Common myeloid progenitor, CD34-positive (primary cell): ENCODE measurements at regions of chr5 and their contacts with region 1.

Region 1: DNA sequence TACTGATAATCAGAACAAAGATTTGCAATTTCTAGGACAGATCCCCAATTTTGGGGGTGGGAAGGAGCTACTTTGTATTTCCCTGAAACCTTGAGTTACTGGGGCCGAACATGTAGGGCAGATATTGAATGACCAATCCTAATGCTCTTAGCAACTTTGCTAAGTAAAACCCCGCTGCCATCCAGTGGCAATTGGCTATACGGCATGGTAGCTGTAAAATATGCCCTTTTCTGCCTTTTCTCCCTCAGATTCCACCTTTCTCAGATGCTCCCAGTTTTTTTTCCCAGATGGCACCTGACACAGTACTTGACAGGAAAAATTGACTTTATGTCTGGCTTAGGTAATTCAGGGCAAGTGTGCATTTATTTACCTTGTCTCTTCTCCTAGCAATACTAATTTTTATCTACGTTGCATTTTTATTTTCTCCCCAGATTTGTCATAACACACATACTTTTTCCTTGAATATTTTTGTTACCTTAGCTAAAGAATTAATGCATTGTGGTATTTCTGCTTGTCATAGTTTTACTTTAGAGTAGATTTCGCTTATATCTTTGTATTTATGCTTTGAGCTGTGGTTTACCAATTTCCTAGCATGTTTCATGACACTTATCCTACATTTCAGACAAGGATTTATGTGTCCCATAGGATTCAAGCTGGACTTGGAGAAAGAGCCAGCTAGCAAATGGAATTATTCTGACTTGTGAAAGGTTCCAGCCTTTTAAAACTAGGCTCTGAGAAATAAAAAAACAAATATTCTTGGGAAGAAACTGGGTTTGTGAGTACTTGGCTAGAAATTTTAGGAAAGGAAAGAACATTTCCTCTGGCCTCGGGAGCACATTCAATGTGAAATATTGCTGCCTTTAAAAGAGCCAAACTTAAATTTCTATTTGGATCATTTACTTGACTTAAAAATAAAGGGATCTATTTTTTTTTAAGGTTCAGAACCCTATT is 37.4 kb downstream of the PIK3R1 start:
- DNase-seq: peak; percentile 66 to 81 (median 78)
- H3K4me3 ChIP-seq: no peak overlapping the region
- H3K27ac ChIP-seq: peak overlapping the region; percentile 25 to 43
- H3K4me1 ChIP-seq: peaks cover 52 to 94% (median 81%) of the 10 kb centered on the region in 4 experiments
- H3K27me3 ChIP-seq: no peaks in the 10 kb centered on the region

Region 2: DNA sequence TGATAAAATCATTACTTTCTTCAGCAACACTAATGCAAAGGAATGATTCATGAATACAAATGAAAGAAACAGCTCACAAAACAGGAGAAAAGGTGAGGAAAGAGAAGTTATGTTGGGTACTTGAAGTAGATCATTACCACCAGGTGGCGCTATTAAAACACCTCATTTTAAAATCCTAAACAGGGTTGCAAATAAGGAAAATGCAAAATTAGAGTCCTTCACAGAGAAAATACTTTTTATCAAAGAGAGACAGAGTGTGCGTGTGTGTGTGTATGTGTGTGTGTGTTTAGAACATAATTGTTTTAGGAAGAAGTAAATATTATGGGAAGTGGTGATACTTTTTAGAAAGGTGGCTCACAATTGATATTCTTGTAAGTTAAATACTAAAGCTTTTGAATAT is 1006.8 kb before region 1 on chr5:
- CTCF ChIA-PET with region 1: interaction called, 49 read pairs
- POLR2A ChIA-PET with region 1: interaction called, 3 read pairs
- DNase-seq: peak; percentile 83 to 91 (median 86)
- H3K4me3 ChIP-seq: no peak overlapping the region
- H3K27ac ChIP-seq: no peak overlapping the region
- H3K4me1 ChIP-seq: peaks cover 5 to 19% (median 12%) of the 10 kb centered on the region in 4 experiments
- H3K27me3 ChIP-seq: no peaks in the 10 kb centered on the region

Region 3: DNA sequence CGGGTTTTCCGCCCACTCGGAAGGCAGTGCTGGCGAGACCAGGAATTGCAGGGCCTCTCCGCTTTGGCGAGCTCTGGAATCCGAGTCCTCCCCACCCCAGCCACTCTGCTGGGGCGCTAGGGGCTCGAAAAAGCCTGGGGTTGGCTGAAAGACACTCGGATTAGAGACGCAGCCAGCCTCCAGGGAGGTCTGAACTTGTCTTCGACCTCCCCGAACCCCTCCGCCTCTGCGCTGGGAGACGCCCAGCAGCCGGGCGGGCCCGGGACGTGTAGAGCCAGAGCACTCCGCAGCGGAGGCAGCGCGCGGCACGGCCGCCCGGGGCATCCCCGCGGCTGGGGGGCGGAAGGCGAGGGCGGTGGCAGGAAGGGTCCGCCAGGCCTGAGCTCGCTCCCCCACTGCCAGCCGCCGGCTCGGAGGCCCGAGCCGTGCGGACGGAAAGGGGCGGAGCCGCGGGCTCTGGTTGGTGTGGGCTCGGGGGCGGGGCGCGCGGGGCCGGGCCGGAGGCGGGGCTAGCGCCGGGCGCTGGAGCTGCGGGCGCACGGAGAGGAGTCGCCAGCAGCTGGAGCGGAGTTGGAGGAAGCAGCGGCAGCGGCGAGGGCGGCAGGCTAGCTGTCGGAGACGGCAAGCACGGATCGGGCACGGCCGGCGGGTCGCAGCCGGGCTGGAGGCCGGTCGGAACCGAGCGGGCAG is 37.6 kb before region 1 on chr5 and contains the start of gene PIK3R1:
- CTCF ChIA-PET with region 1: interaction called, 21 read pairs
- POLR2A ChIA-PET with region 1: interaction called, 5 read pairs
- DNase-seq: peak; percentile 90 to 97 (median 96)
- H3K4me3 ChIP-seq: peak within 1 kb of the TSS; percentile 86 to 100 (median 98)
- H3K27ac ChIP-seq: peak within 1 kb of the TSS; percentile 85 to 93
- H3K4me1 ChIP-seq: peaks cover 16 to 42% (median 30%) of the 10 kb centered on the region in 4 experiments
- H3K27me3 ChIP-seq: no peaks in the 10 kb centered on the region

Region 4: DNA sequence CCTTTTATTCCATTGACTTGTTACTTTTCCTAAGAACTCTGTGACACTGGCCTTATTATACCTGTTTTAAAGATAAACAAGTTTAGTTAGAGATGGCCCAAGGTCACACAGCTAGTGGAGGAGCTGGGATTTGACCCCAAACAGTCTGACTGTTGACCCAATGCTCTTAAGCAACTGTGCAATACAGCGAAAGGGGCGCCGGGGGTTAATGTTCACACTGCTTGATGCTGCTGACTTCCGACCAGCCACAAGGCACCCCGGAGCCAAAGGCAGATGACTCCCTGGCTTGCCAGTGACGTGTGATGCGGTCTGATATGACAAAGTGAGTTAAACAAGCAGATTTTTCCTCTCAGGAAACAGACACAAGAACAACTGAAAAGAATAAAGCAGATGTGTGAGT is 13.5 kb before region 1 on chr5:
- CTCF ChIA-PET with region 1: interaction called, 14 read pairs
- POLR2A ChIA-PET with region 1: interaction called, 3 read pairs
- DNase-seq: peak; percentile 94 to 99 (median 98)
- H3K4me3 ChIP-seq: peak overlapping the region in 4 of 7 experiments; percentile 15 to 51 (median 31)
- H3K27ac ChIP-seq: peak overlapping the region; percentile 84 to 89
- H3K4me1 ChIP-seq: peaks cover 39 to 83% (median 70%) of the 10 kb centered on the region in 4 experiments
- H3K27me3 ChIP-seq: no peaks in the 10 kb centered on the region